ENCODE measurements at regions of chr6 and their contacts with region 1.

Region 1: GRCh38 chr6:33585403-33586107 is 5.5 kb upstream of the BAK1 start:
- DNase-seq: peak; percentile 73 to 96 (median 90)
- ATAC-seq: peak; percentile 97
- H3K4me3 ChIP-seq: peak overlapping the region; percentile 1 to 8
- H3K4me3 Mint-ChIP-seq: peak overlapping the region; percentile 39
- H3K27ac ChIP-seq: peak overlapping the region in 1 of 2 experiments; percentile 57
- H3K27ac Mint-ChIP-seq: peak overlapping the region; percentile 91
- H3K4me1 ChIP-seq: peaks cover 19% of the 10 kb centered on the region
- H3K4me1 Mint-ChIP-seq: peaks cover 17% of the 10 kb centered on the region
- H3K27me3 ChIP-seq: no peaks in the 10 kb centered on the region
- H3K27me3 Mint-ChIP-seq: no peaks in the 10 kb centered on the region
- CTCF ChIP-seq: peak; percentile 92

Region 2: GRCh38 chr6:33620856-33621710 is 35.5 kb after region 1 on chr6 and contains the start of gene ITPR3:
- CTCF ChIA-PET with region 1: interaction called, 10 read pairs
- POLR2A ChIA-PET with region 1: no interaction called
- intact Hi-C with region 1: loop called in 1 of 2 experiments (anchors 1 kb)
- DNase-seq: peak; percentile 55 to 92 (median 72)
- ATAC-seq: peak; percentile 84
- H3K4me3 ChIP-seq: peak within 1 kb of the TSS; percentile 79 to 95
- H3K4me3 Mint-ChIP-seq: peak within 1 kb of the TSS; percentile 90
- H3K27ac ChIP-seq: peak within 1 kb of the TSS; percentile 78 to 86
- H3K27ac Mint-ChIP-seq: peak within 1 kb of the TSS; percentile 91
- H3K4me1 ChIP-seq: peaks cover 38% of the 10 kb centered on the region
- H3K4me1 Mint-ChIP-seq: peaks cover 66% of the 10 kb centered on the region
- H3K27me3 ChIP-seq: no peaks in the 10 kb centered on the region
- H3K27me3 Mint-ChIP-seq: no peaks in the 10 kb centered on the region
- CTCF ChIP-seq: no peak
- total RNA-seq, gene ITPR3: 39.5 to 40.1 TPM

Region 3: DNA sequence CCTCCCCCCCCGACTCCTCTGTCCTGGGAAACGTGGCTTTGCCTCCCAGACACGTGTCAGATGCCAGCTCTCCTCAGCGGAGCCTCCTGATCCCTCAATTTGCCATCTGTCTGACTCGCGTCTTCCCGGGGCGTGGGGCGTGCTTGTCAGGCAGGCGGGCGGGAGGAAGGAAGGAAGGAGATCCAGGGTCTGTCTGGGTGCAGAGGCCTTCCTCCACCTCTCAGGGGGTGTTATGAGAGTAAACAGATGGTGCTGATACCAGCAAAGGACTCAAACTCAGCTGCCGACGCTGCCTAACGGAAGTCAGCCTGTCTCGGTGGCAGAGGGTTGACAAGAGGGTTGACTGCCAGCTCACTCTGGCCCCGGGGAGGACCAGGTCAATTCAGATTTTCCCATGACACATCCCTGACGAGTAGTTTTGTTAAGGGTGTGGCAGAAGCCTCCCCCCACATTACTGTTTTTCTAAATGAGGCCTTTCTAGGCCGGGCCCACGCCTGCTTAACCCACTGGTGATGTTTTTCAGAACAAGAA is 108.9 kb after region 1 on chr6:
- CTCF ChIA-PET with region 1: interaction called, 14 read pairs
- POLR2A ChIA-PET with region 1: interaction called, 4 read pairs
- intact Hi-C with region 1: no loop called
- DNase-seq: peak; percentile 22 to 81 (median 73)
- ATAC-seq: peak; percentile 63
- H3K4me3 ChIP-seq: no peak overlapping the region
- H3K4me3 Mint-ChIP-seq: peak overlapping the region; percentile 69
- H3K27ac ChIP-seq: peak overlapping the region; percentile 37 to 81
- H3K27ac Mint-ChIP-seq: peak overlapping the region; percentile 97
- H3K4me1 ChIP-seq: peaks cover 64% of the 10 kb centered on the region
- H3K4me1 Mint-ChIP-seq: peaks cover 62% of the 10 kb centered on the region
- H3K27me3 ChIP-seq: no peaks in the 10 kb centered on the region
- H3K27me3 Mint-ChIP-seq: no peaks in the 10 kb centered on the region
- CTCF ChIP-seq: no peak

Region 4: GRCh38 chr6:33733709-33734007 is 148.1 kb after region 1 on chr6:
- CTCF ChIA-PET with region 1: no interaction called
- POLR2A ChIA-PET with region 1: no interaction called
- intact Hi-C with region 1: no loop called
- DNase-seq: no peak
- ATAC-seq: no peak
- H3K4me3 ChIP-seq: no peak overlapping the region
- H3K4me3 Mint-ChIP-seq: no peak overlapping the region
- H3K27ac ChIP-seq: no peak overlapping the region
- H3K27ac Mint-ChIP-seq: no peak overlapping the region
- H3K4me1 ChIP-seq: no peaks in the 10 kb centered on the region
- H3K4me1 Mint-ChIP-seq: no peaks in the 10 kb centered on the region
- H3K27me3 ChIP-seq: no peaks in the 10 kb centered on the region
- H3K27me3 Mint-ChIP-seq: no peaks in the 10 kb centered on the region
- CTCF ChIP-seq: no peak

Region 5: DNA sequence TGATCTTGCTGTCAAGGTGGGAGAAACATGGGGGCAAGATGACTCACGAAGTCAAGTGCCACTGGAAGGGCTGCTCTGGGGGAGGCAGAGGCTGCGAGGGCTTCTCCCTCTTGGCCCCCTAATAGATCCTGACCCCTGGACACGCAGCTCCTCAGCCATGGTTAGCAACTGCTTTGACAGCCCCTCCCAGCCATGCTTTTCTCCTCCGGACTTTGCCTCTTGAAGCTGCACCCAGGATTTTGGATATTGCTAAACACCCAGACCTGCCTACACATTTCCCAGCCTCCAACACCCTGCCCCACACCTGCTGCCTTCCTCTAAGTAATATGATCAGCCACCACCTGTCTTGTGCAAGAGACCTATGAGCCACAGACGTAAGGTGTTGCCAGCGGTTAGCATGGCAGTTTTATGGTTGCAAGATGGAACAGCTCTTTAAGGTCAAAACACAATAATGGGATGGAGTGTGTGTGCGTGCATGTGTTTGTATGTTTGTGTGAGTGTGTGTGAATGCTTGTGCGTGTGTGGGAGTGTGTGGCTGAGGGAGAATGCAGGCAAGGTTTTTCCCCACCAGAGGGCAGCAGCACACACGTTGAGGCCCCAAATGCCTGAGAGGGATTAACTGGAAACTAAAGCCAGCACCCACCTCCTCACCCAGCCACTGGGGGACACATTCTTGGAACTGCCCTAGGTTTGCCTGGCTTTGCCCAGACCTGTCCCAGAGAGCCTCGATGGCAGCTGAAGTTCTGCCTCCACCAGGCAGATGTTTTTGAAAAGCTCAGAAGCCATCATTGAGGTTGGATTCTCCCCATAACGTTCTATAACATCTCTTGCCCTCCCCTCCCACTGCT is 158.7 kb after region 1 on chr6:
- CTCF ChIA-PET with region 1: interaction called, 19 read pairs
- POLR2A ChIA-PET with region 1: no interaction called
- intact Hi-C with region 1: loop called in 1 of 2 experiments (anchors 1 kb)
- DNase-seq: peak; percentile 47 to 83 (median 76)
- ATAC-seq: peak; percentile 95
- H3K4me3 ChIP-seq: no peak overlapping the region
- H3K4me3 Mint-ChIP-seq: no peak overlapping the region
- H3K27ac ChIP-seq: no peak overlapping the region
- H3K27ac Mint-ChIP-seq: no peak overlapping the region
- H3K4me1 ChIP-seq: no peaks in the 10 kb centered on the region
- H3K4me1 Mint-ChIP-seq: peaks cover 3% of the 10 kb centered on the region
- H3K27me3 ChIP-seq: no peaks in the 10 kb centered on the region
- H3K27me3 Mint-ChIP-seq: peaks cover 4% of the 10 kb centered on the region
- CTCF ChIP-seq: peak; percentile 67

Region 6: DNA sequence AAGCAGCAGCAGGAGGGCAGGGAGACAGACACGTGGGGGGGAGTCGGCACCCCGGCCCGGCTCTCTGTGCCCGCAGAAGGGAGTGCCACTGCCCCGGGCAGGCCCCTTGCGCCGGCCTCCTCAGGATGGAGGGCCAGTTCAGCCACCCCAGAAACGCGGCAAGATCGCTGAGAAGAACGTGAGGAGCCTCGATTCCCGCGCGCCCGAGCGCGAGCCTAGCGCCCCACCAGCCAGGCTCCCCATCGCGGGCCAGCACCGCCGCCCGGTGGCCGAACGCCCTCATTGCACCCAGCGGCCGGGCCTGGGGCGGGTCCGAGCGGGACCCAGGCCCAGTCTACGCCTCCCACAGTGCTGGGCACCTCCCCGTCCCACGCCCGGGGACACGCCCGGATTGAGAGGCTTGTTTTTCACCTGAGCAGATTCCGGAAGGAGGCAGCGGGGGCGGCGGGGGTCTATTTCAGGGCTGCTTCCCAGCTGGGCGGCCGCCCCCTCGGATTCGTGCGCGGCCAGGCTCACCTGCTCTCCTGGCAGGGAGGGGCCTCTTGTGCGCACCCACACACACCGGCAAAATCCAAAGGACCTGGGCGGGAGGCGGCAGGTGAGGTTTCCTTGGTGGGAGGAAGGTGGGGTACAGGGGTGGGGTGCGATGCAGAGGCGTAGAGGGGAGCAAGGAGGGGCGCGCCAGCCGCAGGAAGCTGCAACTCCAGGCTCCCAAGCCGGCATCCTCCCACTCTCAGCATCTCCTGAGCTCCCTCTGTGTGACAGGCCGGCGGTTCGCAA is 569.3 kb after region 1 on chr6:
- CTCF ChIA-PET with region 1: interaction called, 4 read pairs
- POLR2A ChIA-PET with region 1: no interaction called
- intact Hi-C with region 1: loop called (anchors 1 to 5 kb)
- DNase-seq: peak; percentile 46 to 84 (median 68)
- ATAC-seq: peak; percentile 99
- H3K4me3 ChIP-seq: peak overlapping the region in 1 of 2 experiments; percentile 20
- H3K4me3 Mint-ChIP-seq: no peak overlapping the region
- H3K27ac ChIP-seq: no peak overlapping the region
- H3K27ac Mint-ChIP-seq: no peak overlapping the region
- H3K4me1 ChIP-seq: peaks cover 14% of the 10 kb centered on the region
- H3K4me1 Mint-ChIP-seq: peaks cover 6% of the 10 kb centered on the region
- H3K27me3 ChIP-seq: peaks cover 9 to 17% of the 10 kb centered on the region in 2 experiments
- H3K27me3 Mint-ChIP-seq: peaks cover 28% of the 10 kb centered on the region
- CTCF ChIP-seq: peak; percentile 97